ENCODE measurements at regions of chr11 and their contacts with region 1.

Region 1: DNA sequence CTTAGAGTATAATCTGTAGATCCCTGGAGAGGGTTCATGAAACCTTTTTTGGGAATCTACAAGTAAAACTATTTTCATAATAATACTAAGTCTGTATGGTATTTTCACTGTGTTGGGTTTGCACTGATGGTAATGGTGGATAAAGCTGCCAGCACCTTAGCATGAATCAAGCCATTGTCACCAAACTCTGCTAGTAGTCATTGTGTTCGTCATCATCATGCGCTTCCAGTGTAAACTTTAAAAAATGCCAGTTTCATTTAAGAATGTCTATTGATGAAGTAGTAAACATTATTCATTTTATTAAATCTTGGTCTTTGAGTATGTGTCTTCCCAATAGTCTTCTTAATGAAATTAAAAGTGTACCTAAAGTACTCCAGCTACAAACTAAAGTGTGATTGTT is 15.0 kb downstream of the ALKBH3 start:
- DNase-seq: no peak
- H3K4me3 ChIP-seq: no peak overlapping the region
- H3K27ac ChIP-seq: no peak overlapping the region
- H3K27me3 ChIP-seq: no peaks in the 10 kb centered on the region
- CTCF ChIP-seq: no peak

Region 2: GRCh38 chr11:43880640-43881159 is 14.9 kb before region 1 on chr11 and contains the start of gene ALKBH3:
- CTCF ChIA-PET with region 1: interaction called, 25 read pairs
- POLR2A ChIA-PET with region 1: interaction called, 3 read pairs
- DNase-seq: peak; percentile 81
- H3K4me3 ChIP-seq: peak within 1 kb of the TSS; percentile 75
- H3K27ac ChIP-seq: no peak within 1 kb of the TSS
- H3K27me3 ChIP-seq: no peaks in the 10 kb centered on the region
- CTCF ChIP-seq: peak; percentile 18; the same call in 1 of the 2 replicates
- polyA plus RNA-seq, gene ALKBH3: 35.0 and 36.5 TPM in 2 replicates

Region 3: GRCh38 chr11:43905813-43906241 is 10.2 kb after region 1 on chr11:
- CTCF ChIA-PET with region 1: interaction called, 65 read pairs
- POLR2A ChIA-PET with region 1: no interaction called
- DNase-seq: no peak
- H3K4me3 ChIP-seq: no peak overlapping the region
- H3K27ac ChIP-seq: no peak overlapping the region
- H3K27me3 ChIP-seq: no peaks in the 10 kb centered on the region
- CTCF ChIP-seq: no peak

Region 4: GRCh38 chr11:43944761-43945311 is 49.2 kb after region 1 on chr11:
- CTCF ChIA-PET with region 1: interaction called, 87 read pairs
- POLR2A ChIA-PET with region 1: no interaction called
- DNase-seq: no peak
- H3K4me3 ChIP-seq: no peak overlapping the region
- H3K27ac ChIP-seq: no peak overlapping the region
- H3K27me3 ChIP-seq: peaks cover 57% of the 10 kb centered on the region
- CTCF ChIP-seq: peak; percentile 78

Region 5: GRCh38 chr11:44036811-44037657 is 141.4 kb after region 1 on chr11:
- CTCF ChIA-PET with region 1: interaction called, 180 read pairs
- POLR2A ChIA-PET with region 1: no interaction called
- DNase-seq: peak; percentile 60
- H3K4me3 ChIP-seq: no peak overlapping the region
- H3K27ac ChIP-seq: no peak overlapping the region
- H3K27me3 ChIP-seq: peaks cover 17% of the 10 kb centered on the region
- CTCF ChIP-seq: peak; percentile 92

Measured in AG04450 (cell line).